ENCODE measurements at regions of chr11 and their contacts with region 1.

Region 1: GRCh38 chr11:35822815-35823495 is 120.9 kb upstream of the LDLRAD3 start:
- DNase-seq: no peak
- H3K4me3 ChIP-seq: no peak overlapping the region
- H3K27ac ChIP-seq: no peak overlapping the region
- H3K4me1 ChIP-seq: peaks cover 8% of the 10 kb centered on the region
- H3K27me3 ChIP-seq: no peaks in the 10 kb centered on the region
- CTCF ChIP-seq: no peak
- POLR2A ChIP-seq: no peak

Region 2: GRCh38 chr11:35478471-35479091 is 344.4 kb before region 1 on chr11:
- CTCF ChIA-PET with region 1: no interaction called
- POLR2A ChIA-PET with region 1: no interaction called
- dilution Hi-C with region 1: no loop called
- intact Hi-C with region 1: no loop called
- DNase-seq: no peak
- H3K4me3 ChIP-seq: no peak overlapping the region
- H3K27ac ChIP-seq: no peak overlapping the region
- H3K4me1 ChIP-seq: no peaks in the 10 kb centered on the region
- H3K27me3 ChIP-seq: peaks cover 3 to 10% of the 10 kb centered on the region in 2 experiments
- CTCF ChIP-seq: no peak
- POLR2A ChIP-seq: no peak

Region 3: GRCh38 chr11:35735903-35736302 is 87.1 kb before region 1 on chr11:
- CTCF ChIA-PET with region 1: interaction called, 13 read pairs
- POLR2A ChIA-PET with region 1: no interaction called
- dilution Hi-C with region 1: no loop called
- intact Hi-C with region 1: no loop called
- DNase-seq: peak; percentile 78
- H3K4me3 ChIP-seq: no peak overlapping the region
- H3K27ac ChIP-seq: peak overlapping the region; percentile 73
- H3K4me1 ChIP-seq: peaks cover 25% of the 10 kb centered on the region
- H3K27me3 ChIP-seq: no peaks in the 10 kb centered on the region
- CTCF ChIP-seq: no peak
- POLR2A ChIP-seq: no peak

Region 4: GRCh38 chr11:35852056-35852455 is 29.1 kb after region 1 on chr11:
- CTCF ChIA-PET with region 1: interaction called, 50 read pairs
- POLR2A ChIA-PET with region 1: no interaction called
- dilution Hi-C with region 1: no loop called
- intact Hi-C with region 1: loop called (anchors 1 kb)
- DNase-seq: peak; percentile 78
- H3K4me3 ChIP-seq: no peak overlapping the region
- H3K27ac ChIP-seq: no peak overlapping the region
- H3K4me1 ChIP-seq: peaks cover 15% of the 10 kb centered on the region
- H3K27me3 ChIP-seq: peaks cover 4 to 11% of the 10 kb centered on the region in 2 experiments
- CTCF ChIP-seq: no peak
- POLR2A ChIP-seq: no peak

Region 5: GRCh38 chr11:35969089-35970042 is 146.4 kb after region 1 on chr11:
- CTCF ChIA-PET with region 1: interaction called, 14 read pairs
- POLR2A ChIA-PET with region 1: no interaction called
- dilution Hi-C with region 1: no loop called
- intact Hi-C with region 1: no loop called
- DNase-seq: peak; percentile 21
- H3K4me3 ChIP-seq: no peak overlapping the region
- H3K27ac ChIP-seq: no peak overlapping the region
- H3K4me1 ChIP-seq: peaks cover 8% of the 10 kb centered on the region
- H3K27me3 ChIP-seq: no peaks in the 10 kb centered on the region
- CTCF ChIP-seq: no peak
- POLR2A ChIP-seq: no peak

Region 6: GRCh38 chr11:36056160-36056751 is 233.3 kb after region 1 on chr11:
- CTCF ChIA-PET with region 1: interaction called, 98 read pairs
- POLR2A ChIA-PET with region 1: no interaction called
- dilution Hi-C with region 1: no loop called
- intact Hi-C with region 1: loop called (anchors 1 kb)
- DNase-seq: peak; percentile 58
- H3K4me3 ChIP-seq: no peak overlapping the region
- H3K27ac ChIP-seq: no peak overlapping the region
- H3K4me1 ChIP-seq: peaks cover 18% of the 10 kb centered on the region
- H3K27me3 ChIP-seq: no peaks in the 10 kb centered on the region
- CTCF ChIP-seq: peak; percentile 69 to 73
- POLR2A ChIP-seq: no peak

Region 7: GRCh38 chr11:36162883-36163434 is 340.0 kb after region 1 on chr11:
- CTCF ChIA-PET with region 1: interaction called, 39 read pairs
- POLR2A ChIA-PET with region 1: no interaction called
- dilution Hi-C with region 1: no loop called
- intact Hi-C with region 1: no loop called
- DNase-seq: peak; percentile 61
- H3K4me3 ChIP-seq: no peak overlapping the region
- H3K27ac ChIP-seq: no peak overlapping the region
- H3K4me1 ChIP-seq: peaks cover 25% of the 10 kb centered on the region
- H3K27me3 ChIP-seq: no peaks in the 10 kb centered on the region
- CTCF ChIP-seq: no peak
- POLR2A ChIP-seq: no peak